ENCODE measurements at regions of chrX and their contacts with region 1.

Region 1: GRCh38 chrX:20266810-20267606 is at the start of gene RPS6KA3:
- DNase-seq: peak; percentile 85
- H3K4me3 Mint-ChIP-seq: peak within 1 kb of the TSS; percentile 95
- H3K27ac Mint-ChIP-seq: peak within 1 kb of the TSS; percentile 99
- H3K4me1 Mint-ChIP-seq: peaks cover 16% of the 10 kb centered on the region
- H3K27me3 Mint-ChIP-seq: peaks cover 13% of the 10 kb centered on the region
- total RNA-seq, gene RPS6KA3: 53.1 and 55.3 TPM in 2 replicates

Region 2: DNA sequence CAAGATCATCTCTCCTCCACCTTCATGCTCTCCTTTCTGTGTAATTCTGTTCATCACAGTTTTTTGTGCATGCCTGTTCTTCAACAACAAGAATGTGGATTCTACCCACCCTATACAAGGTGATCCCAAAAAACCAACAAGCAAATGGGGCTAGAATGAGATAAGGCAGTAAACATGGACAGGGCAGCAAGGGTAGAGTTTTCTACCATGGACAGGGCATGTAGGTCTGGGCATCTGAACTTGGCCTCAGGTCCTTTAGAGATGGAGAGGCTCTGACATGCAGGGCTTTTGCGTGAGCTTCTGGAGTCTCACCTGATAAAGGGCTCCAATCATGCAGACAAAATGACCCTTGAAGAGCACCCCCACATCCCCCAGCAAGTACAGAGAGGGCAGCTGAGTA is 186.7 kb before region 1 on chrX:
- intact Hi-C with region 1: no loop called
- DNase-seq: no peak
- H3K4me3 Mint-ChIP-seq: no peak overlapping the region
- H3K27ac Mint-ChIP-seq: no peak overlapping the region
- H3K4me1 Mint-ChIP-seq: no peaks in the 10 kb centered on the region
- H3K27me3 Mint-ChIP-seq: no peaks in the 10 kb centered on the region

Region 3: GRCh38 chrX:20112021-20112797 is 154.8 kb before region 1 on chrX:
- intact Hi-C with region 1: no loop called
- DNase-seq: no peak
- H3K4me3 Mint-ChIP-seq: no peak overlapping the region
- H3K27ac Mint-ChIP-seq: no peak overlapping the region
- H3K4me1 Mint-ChIP-seq: no peaks in the 10 kb centered on the region
- H3K27me3 Mint-ChIP-seq: peaks cover 24% of the 10 kb centered on the region

Region 4: DNA sequence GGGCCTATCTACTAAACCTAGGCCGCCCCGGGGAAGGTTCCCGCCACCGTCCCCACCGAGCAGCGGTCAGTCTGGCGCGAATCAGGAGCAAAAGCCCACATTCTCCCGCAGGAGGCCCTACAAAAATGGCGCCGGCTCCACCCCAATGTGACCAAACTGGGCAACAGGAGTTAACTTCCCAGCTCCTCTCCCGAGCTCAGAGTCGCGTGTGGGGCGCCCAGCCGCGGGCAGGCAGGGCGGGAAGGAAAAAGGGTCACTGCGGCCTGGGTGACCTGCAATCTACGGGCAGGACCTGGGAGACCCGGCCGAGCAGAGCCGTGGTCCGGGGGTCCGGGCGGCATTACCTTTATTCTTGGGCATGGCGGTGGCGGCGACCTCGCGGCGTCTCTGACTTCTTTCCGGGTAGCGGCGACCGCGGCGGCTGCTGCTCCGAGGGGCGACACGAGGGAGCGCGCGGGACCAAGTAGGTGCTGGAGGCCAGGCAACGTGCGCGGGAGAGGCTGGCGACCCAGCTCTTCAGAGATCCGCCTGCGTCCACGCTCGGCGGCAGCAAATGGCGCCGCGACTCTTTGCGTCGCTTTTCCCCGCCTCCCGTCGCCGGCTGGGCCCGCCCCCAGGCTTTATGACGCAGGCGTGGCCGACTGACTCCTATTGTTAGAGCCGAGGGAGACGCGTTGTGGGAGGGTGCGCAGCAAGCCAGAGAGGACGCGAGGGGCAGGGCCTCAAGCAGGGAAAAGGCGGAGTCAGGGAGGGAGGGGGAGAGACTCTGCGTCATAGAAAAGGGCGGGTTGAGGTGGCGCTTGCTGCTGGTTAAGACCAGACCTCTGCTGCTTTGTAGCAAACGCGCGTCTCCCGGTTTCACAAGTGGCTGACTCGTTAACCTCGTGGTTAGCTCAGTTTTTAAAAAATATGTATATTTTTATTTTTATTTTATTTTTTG is 125.5 kb before region 1 on chrX and contains the start of gene EIF1AX:
- intact Hi-C with region 1: loop called (anchors 5 kb)
- DNase-seq: peak; percentile 92
- H3K4me3 Mint-ChIP-seq: peak within 1 kb of the TSS; percentile 85
- H3K27ac Mint-ChIP-seq: peak within 1 kb of the TSS; percentile 79
- H3K4me1 Mint-ChIP-seq: peaks cover 27% of the 10 kb centered on the region
- H3K27me3 Mint-ChIP-seq: no peaks in the 10 kb centered on the region
- total RNA-seq, gene EIF1AX: 94.1 and 94.5 TPM in 2 replicates

Region 5: GRCh38 chrX:20224814-20225487 is 42.1 kb before region 1 on chrX:
- intact Hi-C with region 1: loop called (anchors 5 kb)
- DNase-seq: no peak
- H3K4me3 Mint-ChIP-seq: no peak overlapping the region
- H3K27ac Mint-ChIP-seq: peak overlapping the region; percentile 66
- H3K4me1 Mint-ChIP-seq: peaks cover 25% of the 10 kb centered on the region
- H3K27me3 Mint-ChIP-seq: no peaks in the 10 kb centered on the region

Region 6: DNA sequence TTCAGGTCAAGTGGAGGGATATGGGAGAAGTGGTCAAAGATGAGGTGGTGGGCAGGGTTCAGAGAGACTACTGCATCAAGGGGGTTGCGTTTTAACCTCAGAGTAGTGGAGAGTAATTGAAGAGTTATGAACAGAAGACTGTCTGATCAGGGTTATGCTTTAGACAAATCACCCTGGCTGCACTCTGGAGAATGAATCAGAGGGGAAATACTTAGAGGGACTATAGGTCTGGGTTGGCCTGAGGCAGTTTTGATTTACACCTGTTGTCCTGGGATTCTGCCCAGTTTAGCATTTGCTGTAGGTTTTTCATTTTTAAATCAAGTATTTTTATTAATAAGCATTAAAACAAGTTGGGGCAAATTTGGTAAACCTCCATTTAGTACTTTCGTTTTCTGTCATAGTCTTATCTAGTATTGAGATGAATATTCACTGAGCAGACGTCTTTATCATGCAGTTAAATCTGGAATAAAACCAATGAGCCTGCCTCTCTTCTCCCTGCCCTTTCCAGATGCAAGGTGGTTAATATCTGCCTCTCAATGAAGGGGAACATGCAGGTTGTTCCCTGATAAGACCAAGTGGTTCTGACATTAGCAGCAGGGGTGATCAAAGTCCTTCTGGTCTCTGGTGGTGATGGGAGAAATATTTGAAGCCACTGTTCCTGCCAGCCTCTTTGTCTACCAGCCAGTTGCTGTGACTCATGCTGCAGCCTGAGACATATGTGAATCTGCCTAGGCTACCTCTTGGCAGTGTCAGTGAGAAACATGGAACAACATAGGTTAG is 115.7 kb after region 1 on chrX:
- intact Hi-C with region 1: loop called (anchors 2 kb)
- DNase-seq: peak; percentile 9
- H3K4me3 Mint-ChIP-seq: no peak overlapping the region
- H3K27ac Mint-ChIP-seq: peak overlapping the region; percentile 65
- H3K4me1 Mint-ChIP-seq: peaks cover 25% of the 10 kb centered on the region
- H3K27me3 Mint-ChIP-seq: no peaks in the 10 kb centered on the region